CD14-positive monocyte (primary cell): ENCODE measurements at regions of chr11 and their contacts with region 1.

Region 1: GRCh38 chr11:506238-506994 is 626 bp downstream of the RNH1 start:
- DNase-seq: peak; percentile 96 to 98 (median 98)
- H3K4me3 ChIP-seq: peak overlapping the region; percentile 61 to 81 (median 79)
- H3K4me3 Mint-ChIP-seq: peak overlapping the region; percentile 92 to 95
- H3K27ac ChIP-seq: peak overlapping the region; percentile 99 to 100
- H3K27ac Mint-ChIP-seq: peak overlapping the region; percentile 99 to 100 (median 100)
- H3K4me1 ChIP-seq: peaks cover 51 to 54% of the 10 kb centered on the region in 2 donors
- H3K4me1 Mint-ChIP-seq: peaks cover 40% of the 10 kb centered on the region
- H3K27me3 ChIP-seq: no peaks in the 10 kb centered on the region
- H3K27me3 Mint-ChIP-seq: no peaks in the 10 kb centered on the region
- CTCF ChIP-seq: no peak

Region 2: GRCh38 chr11:207208-207862 is 299.1 kb before region 1 on chr11 and contains the starts of genes BET1L and RIC8A:
- intact Hi-C with region 1: loop called in 1 of 2 experiments (anchors 10 kb)
- DNase-seq: peak; percentile 98 to 99 (median 99)
- H3K4me3 ChIP-seq: peak within 1 kb of the TSS; percentile 78 to 98 (median 81)
- H3K4me3 Mint-ChIP-seq: peak within 1 kb of the TSS; percentile 97 to 98
- H3K27ac ChIP-seq: peak within 1 kb of the TSS; percentile 98 to 100
- H3K27ac Mint-ChIP-seq: peak within 1 kb of the TSS; percentile 99 to 100 (median 100)
- H3K4me1 ChIP-seq: peaks cover 39 to 59% of the 10 kb centered on the region in 2 donors
- H3K4me1 Mint-ChIP-seq: peaks cover 53% of the 10 kb centered on the region
- H3K27me3 ChIP-seq: no peaks in the 10 kb centered on the region
- H3K27me3 Mint-ChIP-seq: peaks cover 2 to 5% (median 4%) of the 10 kb centered on the region in 3 donors
- CTCF ChIP-seq: no peak
- polyA plus RNA-seq, gene BET1L: 9.5 to 37.3 (median 29.3) TPM
- polyA plus RNA-seq, gene RIC8A: 51.1 to 79.1 (median 56.5) TPM

Region 3: GRCh38 chr11:236774-237767 is 269.3 kb before region 1 on chr11 and contains the start of gene PSMD13:
- intact Hi-C with region 1: loop called (anchors 2 to 5 kb)
- DNase-seq: peak; percentile 81 to 84 (median 84)
- H3K4me3 ChIP-seq: peak within 1 kb of the TSS; percentile 93 to 99 (median 96)
- H3K4me3 Mint-ChIP-seq: peak within 1 kb of the TSS; percentile 96 to 97
- H3K27ac ChIP-seq: peak within 1 kb of the TSS; percentile 97 to 98
- H3K27ac Mint-ChIP-seq: peak within 1 kb of the TSS; percentile 99 to 100 (median 100)
- H3K4me1 ChIP-seq: peaks cover 20 to 23% of the 10 kb centered on the region in 2 donors
- H3K4me1 Mint-ChIP-seq: peaks cover 24% of the 10 kb centered on the region
- H3K27me3 ChIP-seq: no peaks in the 10 kb centered on the region
- H3K27me3 Mint-ChIP-seq: peaks cover 0 to 4% (median 1%) of the 10 kb centered on the region in 3 donors
- CTCF ChIP-seq: no peak
- polyA plus RNA-seq, gene PSMD13: 136 to 272 (median 218) TPM

Region 4: DNA sequence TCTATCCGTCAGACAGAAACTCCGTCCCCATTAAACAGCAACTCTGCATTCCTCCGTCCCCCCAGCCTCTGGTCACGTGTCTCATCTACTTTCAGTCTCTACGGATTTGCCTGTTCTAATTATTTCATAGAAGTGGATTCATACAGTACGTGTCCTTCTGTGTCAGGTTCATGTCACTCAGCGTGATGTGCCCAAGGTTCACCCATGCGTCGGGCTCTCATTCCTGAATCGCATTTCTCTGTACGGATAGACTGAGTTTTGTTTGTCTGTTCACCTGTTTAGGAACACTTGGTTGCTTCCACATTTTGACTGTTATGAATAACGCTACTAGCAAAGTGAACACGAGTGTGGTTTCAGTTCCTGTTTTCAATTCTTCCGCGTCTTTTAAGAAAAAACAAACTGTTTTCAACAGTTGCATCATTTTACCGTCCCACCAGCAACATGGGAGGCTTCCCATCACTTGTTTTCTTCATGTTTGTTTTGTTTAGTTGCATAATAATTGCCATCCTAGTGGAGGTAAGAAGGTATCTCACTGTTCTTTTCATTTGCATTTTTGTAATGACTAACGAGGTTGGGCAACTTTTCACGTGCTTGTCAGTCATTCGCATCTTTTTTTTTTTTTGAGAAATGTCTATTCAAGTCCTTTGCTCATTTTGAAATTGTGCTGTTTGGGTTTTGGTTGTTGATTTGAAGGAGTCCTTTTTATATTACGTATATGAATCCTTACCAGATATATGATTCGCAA is 237.1 kb before region 1 on chr11:
- intact Hi-C with region 1: loop called in 1 of 2 experiments (anchors 2 kb)
- DNase-seq: peak; percentile 96 to 99 (median 97)
- H3K4me3 ChIP-seq: peak overlapping the region; percentile 47 to 77 (median 55)
- H3K4me3 Mint-ChIP-seq: peak overlapping the region; percentile 84 to 99
- H3K27ac ChIP-seq: peak overlapping the region; percentile 99 to 100
- H3K27ac Mint-ChIP-seq: peak overlapping the region; percentile 97 to 100 (median 99)
- H3K4me1 ChIP-seq: peaks cover 37% of the 10 kb centered on the region in 2 donors
- H3K4me1 Mint-ChIP-seq: peaks cover 35% of the 10 kb centered on the region
- H3K27me3 ChIP-seq: no peaks in the 10 kb centered on the region
- H3K27me3 Mint-ChIP-seq: peaks cover 0 to 9% (median 2%) of the 10 kb centered on the region in 3 donors
- CTCF ChIP-seq: peak; percentile 55

Region 5: DNA sequence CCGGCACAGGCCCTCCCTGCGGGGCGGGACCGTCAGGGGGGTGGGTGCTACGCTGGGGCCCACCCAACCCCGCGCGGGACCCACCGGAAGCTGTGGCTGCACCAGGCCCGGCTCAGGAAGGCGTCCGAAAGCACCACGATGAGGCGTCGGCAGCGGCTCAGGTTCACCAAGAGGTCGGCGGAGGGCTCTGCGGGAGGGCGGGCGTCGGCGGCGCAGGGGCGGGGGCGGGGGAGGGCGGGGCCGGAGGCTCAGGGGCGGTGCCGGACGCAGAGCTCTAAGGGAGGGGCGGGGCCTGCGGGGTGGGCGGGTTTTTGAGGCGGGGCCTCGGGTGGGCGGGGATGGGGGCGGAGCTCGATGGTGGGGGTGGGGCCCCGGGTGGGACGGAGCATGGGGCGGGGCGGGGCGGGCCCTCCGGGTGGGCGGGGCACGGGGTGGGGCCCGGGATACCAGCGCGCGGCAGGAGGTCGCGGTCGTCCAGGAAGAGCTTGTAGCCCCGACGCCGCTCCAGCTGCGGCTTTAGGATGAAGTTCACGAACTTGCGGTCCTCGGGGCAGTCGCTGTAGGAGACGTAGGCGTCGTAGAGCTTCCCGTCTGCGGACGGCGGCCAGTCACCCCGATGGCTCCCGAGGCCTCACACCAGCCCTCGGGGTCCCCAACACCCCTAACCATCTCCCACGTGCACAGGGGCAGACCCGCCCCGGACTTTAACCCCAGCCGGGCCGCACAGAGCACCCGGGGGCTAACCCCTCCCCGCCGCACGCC is 99.3 kb before region 1 on chr11:
- intact Hi-C with region 1: loop called (anchors 2 to 5 kb)
- DNase-seq: peak; percentile 76 to 90 (median 87)
- H3K4me3 ChIP-seq: peak overlapping the region; percentile 25 to 75 (median 48)
- H3K4me3 Mint-ChIP-seq: peak overlapping the region; percentile 31 to 59
- H3K27ac ChIP-seq: peak overlapping the region; percentile 25 to 73
- H3K27ac Mint-ChIP-seq: peak overlapping the region in 4 of 7 donors; percentile 32 to 41 (median 38)
- H3K4me1 ChIP-seq: peaks cover 15 to 21% of the 10 kb centered on the region in 2 donors
- H3K4me1 Mint-ChIP-seq: peaks cover 7% of the 10 kb centered on the region
- H3K27me3 ChIP-seq: no peaks in the 10 kb centered on the region
- H3K27me3 Mint-ChIP-seq: peaks cover 0 to 12% (median 1%) of the 10 kb centered on the region in 3 donors
- CTCF ChIP-seq: no peak

Region 6: DNA sequence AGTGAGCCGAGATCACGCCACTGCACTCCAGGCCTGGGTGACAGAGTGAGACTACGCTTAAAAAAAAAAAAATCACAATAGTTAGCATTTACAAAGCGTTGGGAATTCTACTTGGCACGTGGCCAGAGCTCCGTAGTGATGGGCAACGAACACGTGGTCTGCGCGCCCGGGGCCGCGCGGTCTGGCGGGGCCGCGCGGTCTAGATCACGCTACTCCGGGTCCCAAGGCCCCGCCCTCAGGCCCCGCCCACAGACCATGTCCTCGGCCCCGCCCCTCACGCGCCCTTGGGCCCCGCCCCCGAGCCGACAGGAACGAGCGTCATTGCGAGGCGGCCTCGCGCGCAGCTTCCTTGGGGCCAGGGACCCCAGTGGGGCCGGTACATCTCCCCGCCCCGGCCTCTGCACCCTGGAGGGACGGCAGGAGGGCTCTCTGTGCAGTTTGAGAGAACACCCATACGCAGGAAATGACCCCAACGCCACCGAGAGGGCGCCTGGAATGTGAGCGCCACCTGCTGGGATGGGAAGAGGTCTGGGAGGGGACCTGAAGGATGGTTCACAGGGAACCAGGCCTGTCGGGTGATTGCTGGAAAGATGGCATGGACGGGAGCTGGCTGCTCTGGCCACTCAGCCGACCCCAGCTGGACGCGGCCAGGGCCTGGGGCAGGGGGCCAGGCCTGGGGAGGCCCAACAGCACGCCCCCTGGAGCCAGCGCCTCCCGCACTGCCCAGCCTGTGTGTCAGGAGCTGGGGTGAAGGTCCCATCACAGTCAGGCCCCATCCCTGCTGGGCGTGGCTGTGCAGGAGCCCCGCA is 58.3 kb before region 1 on chr11:
- intact Hi-C with region 1: loop called (anchors 2 kb)
- DNase-seq: peak; percentile 85 to 88 (median 88)
- H3K4me3 ChIP-seq: peak overlapping the region; percentile 55 to 77 (median 68)
- H3K4me3 Mint-ChIP-seq: peak overlapping the region; percentile 82 to 90
- H3K27ac ChIP-seq: peak overlapping the region; percentile 82 to 84
- H3K27ac Mint-ChIP-seq: peak overlapping the region; percentile 93 to 98 (median 97)
- H3K4me1 ChIP-seq: peaks cover 27 to 34% of the 10 kb centered on the region in 2 donors
- H3K4me1 Mint-ChIP-seq: peaks cover 20% of the 10 kb centered on the region
- H3K27me3 ChIP-seq: peaks cover 0 to 5% of the 10 kb centered on the region in 2 donors
- H3K27me3 Mint-ChIP-seq: peaks cover 11 to 19% (median 12%) of the 10 kb centered on the region in 3 donors
- CTCF ChIP-seq: peak; percentile 85

Region 7: DNA sequence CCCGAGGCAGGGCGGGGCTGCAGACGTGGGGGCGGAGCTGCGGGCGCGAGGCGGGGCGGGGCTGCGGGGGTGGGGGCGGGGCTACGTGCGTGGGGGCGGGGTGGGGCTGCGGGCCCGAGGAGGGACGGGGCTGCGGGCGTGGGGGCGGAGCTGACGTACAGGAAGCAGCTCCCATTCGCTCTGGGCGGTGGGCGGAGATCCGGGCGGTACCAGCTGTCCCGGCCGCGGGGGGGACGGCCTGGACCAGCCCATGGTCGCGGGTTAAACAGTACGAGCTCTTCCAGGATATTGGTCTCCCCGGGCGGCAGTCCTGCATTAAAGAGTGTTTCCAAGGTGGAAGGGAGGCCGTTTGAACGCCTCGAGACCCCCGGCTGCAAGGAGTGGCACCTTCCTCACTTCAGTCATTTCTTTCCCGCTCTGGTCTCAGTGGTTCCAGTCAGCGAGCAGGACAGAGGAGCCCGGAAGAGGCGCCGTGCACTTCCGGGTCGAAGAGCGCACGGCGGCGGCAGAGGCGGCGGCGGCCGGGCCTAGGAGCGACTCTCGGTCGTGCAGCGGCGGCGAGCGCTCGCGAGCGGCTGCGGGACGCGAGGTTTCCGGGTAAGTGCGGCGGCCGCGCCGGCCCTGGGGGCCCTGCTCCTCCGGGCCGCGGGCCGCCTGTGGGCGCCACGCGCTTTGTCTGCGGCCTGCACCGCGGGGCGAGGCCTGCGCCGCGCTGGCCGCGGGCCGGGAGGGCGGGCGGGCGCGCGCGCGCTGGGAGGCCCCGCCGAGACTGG is 69.8 kb after region 1 on chr11 and contains the start of gene PHRF1:
- intact Hi-C with region 1: loop called in 1 of 2 experiments (anchors 5 kb)
- DNase-seq: peak; percentile 91 to 96 (median 96)
- H3K4me3 ChIP-seq: peak within 1 kb of the TSS; percentile 79 to 91 (median 79)
- H3K4me3 Mint-ChIP-seq: peak within 1 kb of the TSS; percentile 93 to 98
- H3K27ac ChIP-seq: peak within 1 kb of the TSS; percentile 80 to 96
- H3K27ac Mint-ChIP-seq: peak within 1 kb of the TSS; percentile 91 to 100 (median 99)
- H3K4me1 ChIP-seq: peaks cover 22 to 40% of the 10 kb centered on the region in 2 donors
- H3K4me1 Mint-ChIP-seq: peaks cover 37% of the 10 kb centered on the region
- H3K27me3 ChIP-seq: peaks cover 8 to 28% of the 10 kb centered on the region in 2 donors
- H3K27me3 Mint-ChIP-seq: peaks cover 22 to 38% (median 32%) of the 10 kb centered on the region in 3 donors
- CTCF ChIP-seq: no peak
- polyA plus RNA-seq, gene PHRF1: 1.3 to 11.1 (median 3.3) TPM